Posterior cingulate gyrus (tissue), 11 donors: ENCODE measurements at regions of chr1 and their contacts with region 1.

Region 1: GRCh38 chr1:33181921-33182341 is at the start of gene TRIM62:
- DNase-seq: peak; percentile 69 to 98 (median 82)

Region 2: GRCh38 chr1:33127001-33127791 is 54.7 kb before region 1 on chr1:
- intact Hi-C with region 1: loop called (anchors 1 kb)
- DNase-seq: peak; percentile 94 to 99 (median 96)

Region 3: GRCh38 chr1:33256701-33257399 is 74.9 kb after region 1 on chr1:
- intact Hi-C with region 1: loop called (anchors 5 kb)
- DNase-seq: peak in 5 of 10 donors; percentile 28 to 91 (median 34)